A673 (cell line): ENCODE measurements at regions of chr7 and their contacts with region 1.

Region 1: DNA sequence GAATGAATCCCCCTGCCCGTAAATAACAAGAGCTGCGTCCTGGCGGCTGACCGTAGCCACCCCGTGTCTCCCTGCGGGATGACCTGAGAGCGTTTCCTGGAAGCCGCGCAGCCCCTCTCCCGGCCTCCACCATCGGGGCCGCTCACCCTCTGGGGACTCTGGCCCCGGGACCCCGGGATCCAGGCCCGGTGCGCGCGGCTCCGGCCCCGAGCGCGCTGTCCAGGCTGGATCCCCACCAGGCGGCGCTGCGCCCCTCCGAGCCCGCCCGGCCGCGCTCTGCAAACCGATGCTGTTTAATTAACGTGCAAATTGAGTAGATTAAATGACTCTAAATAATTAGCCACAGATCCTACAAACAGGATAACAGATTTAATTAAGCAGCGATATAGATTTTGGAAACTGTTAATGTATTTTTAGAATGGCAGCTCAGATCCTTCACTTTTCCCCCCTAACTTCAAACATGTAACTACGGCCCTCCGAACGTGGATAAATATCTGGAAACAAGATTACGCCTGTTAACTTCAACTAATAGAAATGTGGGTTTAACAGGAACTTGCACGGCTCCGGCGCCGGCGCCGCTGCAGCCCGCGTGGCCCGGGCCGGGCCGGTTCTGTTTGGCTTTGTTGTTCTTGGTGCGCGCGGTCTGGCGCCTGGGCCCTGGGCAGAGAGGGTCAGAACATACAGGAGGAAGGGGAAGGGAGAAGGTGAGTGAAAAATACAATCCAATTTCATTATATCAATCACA is 7.1 kb upstream of the UNCX start:
- DNase-seq: no peak
- H3K4me3 ChIP-seq: peak overlapping the region; percentile 19
- H3K27ac ChIP-seq: peak overlapping the region; percentile 97
- H3K4me1 ChIP-seq: peaks cover 45% of the 10 kb centered on the region
- H3K27me3 ChIP-seq: no peaks in the 10 kb centered on the region
- CTCF ChIP-seq: peak; percentile 84

Region 2: GRCh38 chr7:954330-955238 is 271.0 kb before region 1 on chr7 and contains the start of gene ADAP1:
- CTCF ChIA-PET with region 1: no interaction called
- POLR2A ChIA-PET with region 1: no interaction called
- intact Hi-C with region 1: no loop called
- DNase-seq: peak; percentile 67
- H3K4me3 ChIP-seq: peak within 1 kb of the TSS; percentile 53
- H3K27ac ChIP-seq: no peak within 1 kb of the TSS
- H3K4me1 ChIP-seq: peaks cover 21% of the 10 kb centered on the region
- H3K27me3 ChIP-seq: no peaks in the 10 kb centered on the region
- CTCF ChIP-seq: no peak
- total RNA-seq, gene ADAP1: 16.4 and 18.6 TPM in 2 replicates

Region 3: GRCh38 chr7:1290026-1290678 is 64.5 kb after region 1 on chr7:
- CTCF ChIA-PET with region 1: interaction called, 3 read pairs
- POLR2A ChIA-PET with region 1: no interaction called
- intact Hi-C with region 1: loop called (anchors 5 kb)
- DNase-seq: peak; percentile 89
- H3K4me3 ChIP-seq: peak overlapping the region; percentile 39
- H3K27ac ChIP-seq: peak overlapping the region; percentile 91
- H3K4me1 ChIP-seq: peaks cover 38% of the 10 kb centered on the region
- H3K27me3 ChIP-seq: no peaks in the 10 kb centered on the region
- CTCF ChIP-seq: peak; percentile 57

Region 4: DNA sequence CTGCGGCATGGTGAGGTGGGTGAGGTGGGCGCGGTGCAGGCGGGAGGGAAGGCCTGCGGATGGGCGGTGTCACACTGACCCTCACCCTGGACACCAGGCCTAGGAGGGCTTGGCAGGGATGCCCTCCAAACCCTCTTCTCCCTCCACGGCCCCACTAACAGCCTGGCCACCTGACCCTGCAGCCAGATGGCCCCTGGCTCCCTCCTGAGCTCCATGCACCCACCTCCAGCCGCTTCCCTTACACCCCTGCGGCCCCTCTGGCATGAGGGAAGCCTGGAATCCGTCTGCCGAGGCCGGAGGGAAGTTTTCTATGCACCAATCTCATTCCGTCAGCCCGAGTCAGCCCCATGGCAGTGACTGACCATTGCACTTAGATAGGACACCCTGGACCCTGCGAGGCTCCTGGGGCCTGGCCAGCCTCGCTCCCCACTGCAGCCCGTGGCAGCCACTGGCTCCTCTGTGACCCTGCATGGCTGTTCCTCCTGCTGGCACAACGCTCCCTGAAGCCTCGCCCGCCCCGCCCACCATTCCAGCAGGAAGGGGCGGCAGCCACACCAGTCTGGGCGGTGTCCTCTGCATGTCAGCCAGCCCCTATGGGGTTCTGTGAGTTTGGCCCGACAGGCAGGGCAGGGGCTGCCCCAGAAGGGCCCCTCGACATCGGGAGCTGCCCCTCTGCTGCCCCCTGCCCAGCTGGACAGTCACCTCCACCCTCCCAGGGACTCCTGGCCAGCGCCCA is 129.8 kb after region 1 on chr7:
- CTCF ChIA-PET with region 1: no interaction called
- POLR2A ChIA-PET with region 1: no interaction called
- intact Hi-C with region 1: no loop called
- DNase-seq: no peak
- H3K4me3 ChIP-seq: no peak overlapping the region
- H3K27ac ChIP-seq: no peak overlapping the region
- H3K4me1 ChIP-seq: no peaks in the 10 kb centered on the region
- H3K27me3 ChIP-seq: no peaks in the 10 kb centered on the region
- CTCF ChIP-seq: no peak

Region 5: DNA sequence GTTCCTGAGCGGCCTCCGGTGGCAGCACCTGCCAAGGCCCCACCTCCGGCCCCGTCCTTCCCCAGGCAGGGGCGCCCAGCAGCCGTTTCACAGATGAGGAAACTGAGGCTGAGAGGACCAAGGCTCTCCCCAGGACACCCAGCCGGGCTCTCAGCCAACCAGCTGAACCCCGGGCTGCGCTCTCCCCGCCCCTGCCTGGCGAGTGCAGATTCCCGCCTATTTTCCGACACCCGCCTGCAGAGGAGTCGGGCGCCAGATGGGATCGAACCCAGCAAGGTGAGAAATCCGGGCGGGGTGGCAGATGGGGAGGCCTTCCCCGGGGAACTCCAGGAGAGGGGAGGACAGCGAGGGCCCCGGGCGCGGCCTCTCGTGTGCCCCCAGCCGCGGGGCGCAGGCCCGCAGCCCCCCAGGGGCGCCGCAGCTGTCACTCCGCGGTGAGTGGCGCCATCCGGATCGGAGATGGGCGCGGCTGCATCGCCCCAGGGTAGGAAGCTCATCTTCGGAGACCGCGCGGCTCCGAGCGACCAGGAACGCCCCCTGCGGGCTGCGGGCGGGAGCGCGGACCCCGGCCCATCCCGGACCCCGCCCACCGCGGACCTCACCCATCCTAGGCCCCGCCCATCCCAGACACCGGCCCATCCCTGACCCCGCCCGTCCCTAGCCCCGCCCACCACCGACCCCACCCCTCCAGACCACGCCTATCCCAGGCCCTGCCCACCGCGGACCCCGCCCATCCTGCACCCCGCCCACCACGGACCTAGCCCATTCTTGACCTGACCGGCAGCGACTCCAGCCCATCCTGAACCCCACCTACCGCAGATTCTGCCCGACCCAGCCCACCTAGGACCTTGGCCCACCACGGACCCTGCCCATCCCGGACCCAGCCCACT is 143.3 kb after region 1 on chr7:
- CTCF ChIA-PET with region 1: interaction called, 29 read pairs
- POLR2A ChIA-PET with region 1: no interaction called
- intact Hi-C with region 1: loop called (anchors 2 kb)
- DNase-seq: peak; percentile 91
- H3K4me3 ChIP-seq: peak overlapping the region; percentile 41
- H3K27ac ChIP-seq: peak overlapping the region; percentile 44
- H3K4me1 ChIP-seq: peaks cover 27% of the 10 kb centered on the region
- H3K27me3 ChIP-seq: no peaks in the 10 kb centered on the region
- CTCF ChIP-seq: peak; percentile 67

Region 6: GRCh38 chr7:1432411-1433082 is 206.9 kb after region 1 on chr7:
- CTCF ChIA-PET with region 1: interaction called, 6 read pairs
- POLR2A ChIA-PET with region 1: no interaction called
- intact Hi-C with region 1: loop called (anchors 5 kb)
- DNase-seq: peak; percentile 80
- H3K4me3 ChIP-seq: no peak overlapping the region
- H3K27ac ChIP-seq: no peak overlapping the region
- H3K4me1 ChIP-seq: peaks cover 13% of the 10 kb centered on the region
- H3K27me3 ChIP-seq: no peaks in the 10 kb centered on the region
- CTCF ChIP-seq: peak; percentile 97

Region 7: DNA sequence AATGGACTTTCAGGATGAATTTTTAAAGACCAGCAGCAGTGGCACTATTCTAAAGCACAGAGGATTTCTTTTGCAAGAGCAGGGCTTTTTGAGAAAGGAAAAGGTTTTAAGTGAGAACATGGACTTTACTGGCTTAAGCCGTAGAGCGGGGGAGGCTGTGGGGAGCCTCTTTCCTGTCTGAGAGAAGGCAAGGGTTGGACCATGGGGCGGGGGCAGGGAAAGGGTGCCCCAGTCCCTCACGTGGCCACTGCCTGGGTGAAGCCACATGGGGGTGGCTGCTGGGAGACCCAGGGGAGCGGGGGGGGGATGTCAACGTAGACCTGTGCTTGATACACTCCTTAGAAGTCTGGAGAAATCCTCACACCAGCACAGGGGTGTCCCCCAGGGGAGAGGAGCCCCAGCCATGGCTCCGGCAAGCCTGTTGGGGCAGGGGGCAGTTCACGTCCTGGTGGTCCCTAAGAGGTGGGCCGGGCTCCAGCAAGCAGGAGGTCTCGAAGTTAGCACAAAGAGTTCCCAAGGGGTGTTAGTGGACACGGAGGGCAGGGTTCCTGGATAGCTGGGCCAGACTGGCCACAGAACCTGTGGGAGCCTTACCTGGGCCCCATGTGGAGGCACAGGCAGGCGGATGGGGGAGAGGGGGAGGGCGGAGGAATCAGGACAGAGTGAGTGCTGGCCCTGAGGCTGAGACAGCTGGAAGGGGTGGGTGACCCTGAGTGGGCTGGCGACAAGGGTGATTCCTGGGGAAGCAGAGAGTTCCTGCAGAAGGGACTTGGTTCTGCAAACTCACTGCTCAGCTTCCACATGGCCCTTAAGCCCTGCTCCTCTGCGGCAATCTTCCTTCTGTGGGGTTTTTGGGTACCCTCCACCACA is 407.5 kb after region 1 on chr7:
- CTCF ChIA-PET with region 1: no interaction called
- POLR2A ChIA-PET with region 1: no interaction called
- intact Hi-C with region 1: no loop called
- DNase-seq: no peak
- H3K4me3 ChIP-seq: no peak overlapping the region
- H3K27ac ChIP-seq: no peak overlapping the region
- H3K4me1 ChIP-seq: no peaks in the 10 kb centered on the region
- H3K27me3 ChIP-seq: no peaks in the 10 kb centered on the region
- CTCF ChIP-seq: no peak